ENCODE measurements at regions of chr15 and their contacts with region 1.

Region 1: GRCh38 chr15:68492855-68493254 is 60.9 kb upstream of the ITGA11 start:
- DNase-seq: no peak
- H3K4me3 ChIP-seq: no peak overlapping the region
- H3K27ac ChIP-seq: no peak overlapping the region
- H3K4me1 ChIP-seq: no peaks in the 10 kb centered on the region
- H3K27me3 ChIP-seq: peaks cover 23 to 27% of the 10 kb centered on the region in 2 experiments
- CTCF ChIP-seq: no peak
- POLR2A ChIP-seq: no peak

Region 2: DNA sequence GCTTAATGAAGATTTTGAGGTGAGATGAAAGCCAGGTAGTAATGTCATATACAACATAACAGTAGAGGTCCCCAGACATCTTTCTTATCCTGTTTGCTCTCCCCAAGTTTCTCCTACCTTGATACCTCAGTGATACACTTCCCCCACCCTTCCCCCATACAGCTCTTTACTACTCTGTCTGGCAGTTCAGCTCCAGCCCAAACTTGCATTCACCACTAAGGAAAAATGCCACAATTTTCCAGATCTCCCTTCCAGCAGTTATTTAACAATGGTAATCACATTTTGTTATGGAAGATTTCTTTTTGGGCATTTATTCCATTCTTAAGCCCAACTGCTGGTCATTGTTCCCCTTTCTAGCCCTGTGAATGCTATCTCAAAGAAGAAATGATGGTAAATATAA is 26.0 kb before region 1 on chr15:
- CTCF ChIA-PET with region 1: no interaction called
- POLR2A ChIA-PET with region 1: no interaction called
- dilution Hi-C with region 1: no loop called
- intact Hi-C with region 1: loop called (anchors 1 kb)
- DNase-seq: no peak
- H3K4me3 ChIP-seq: no peak overlapping the region
- H3K27ac ChIP-seq: no peak overlapping the region
- H3K4me1 ChIP-seq: no peaks in the 10 kb centered on the region
- H3K27me3 ChIP-seq: peaks cover 2 to 8% of the 10 kb centered on the region in 2 experiments
- CTCF ChIP-seq: no peak
- POLR2A ChIP-seq: no peak